ENCODE measurements at regions of chr13 and their contacts with region 1.

Region 1: GRCh38 chr13:24512197-24512907 is at the start of gene PARP4:
- DNase-seq: peak; percentile 63 to 74 (median 72)
- H3K4me3 ChIP-seq: peak within 1 kb of the TSS; percentile 59
- H3K4me3 Mint-ChIP-seq: peak within 1 kb of the TSS; percentile 83 to 94 (median 92)
- H3K27ac ChIP-seq: peak within 1 kb of the TSS; percentile 77
- H3K27ac Mint-ChIP-seq: peak within 1 kb of the TSS; percentile 88 to 97 (median 92)
- H3K4me1 ChIP-seq: peaks cover 18% of the 10 kb centered on the region
- H3K4me1 Mint-ChIP-seq: peaks cover 18 to 46% (median 33%) of the 10 kb centered on the region in 4 donors
- H3K27me3 ChIP-seq: no peaks in the 10 kb centered on the region
- H3K27me3 Mint-ChIP-seq: no peaks in the 10 kb centered on the region
- total RNA-seq, gene PARP4: 90.0 to 92.9 TPM

Region 2: GRCh38 chr13:24557081-24557480 is 44.7 kb after region 1 on chr13:
- CTCF ChIA-PET with region 1: no interaction called
- POLR2A ChIA-PET with region 1: no interaction called
- intact Hi-C with region 1: loop called (anchors 2 kb)
- DNase-seq: no peak
- H3K4me3 ChIP-seq: no peak overlapping the region
- H3K4me3 Mint-ChIP-seq: no peak overlapping the region
- H3K27ac ChIP-seq: no peak overlapping the region
- H3K27ac Mint-ChIP-seq: no peak overlapping the region
- H3K4me1 ChIP-seq: no peaks in the 10 kb centered on the region
- H3K4me1 Mint-ChIP-seq: peaks cover 7 to 12% (median 9%) of the 10 kb centered on the region in 4 donors
- H3K27me3 ChIP-seq: no peaks in the 10 kb centered on the region
- H3K27me3 Mint-ChIP-seq: peaks cover 28 to 36% of the 10 kb centered on the region in 2 donors

Region 3: GRCh38 chr13:24618014-24618955 is 105.9 kb after region 1 on chr13:
- CTCF ChIA-PET with region 1: no interaction called
- POLR2A ChIA-PET with region 1: no interaction called
- intact Hi-C with region 1: loop called (anchors 5 kb)
- DNase-seq: peak; percentile 52 to 80 (median 64)
- H3K4me3 ChIP-seq: no peak overlapping the region
- H3K4me3 Mint-ChIP-seq: peak overlapping the region in 7 of 8 donors; percentile 10 to 48 (median 29)
- H3K27ac ChIP-seq: peak overlapping the region; percentile 25
- H3K27ac Mint-ChIP-seq: peak overlapping the region; percentile 81 to 94 (median 86)
- H3K4me1 ChIP-seq: peaks cover 21% of the 10 kb centered on the region
- H3K4me1 Mint-ChIP-seq: peaks cover 20 to 45% (median 31%) of the 10 kb centered on the region in 4 donors
- H3K27me3 ChIP-seq: no peaks in the 10 kb centered on the region
- H3K27me3 Mint-ChIP-seq: no peaks in the 10 kb centered on the region

Region 4: DNA sequence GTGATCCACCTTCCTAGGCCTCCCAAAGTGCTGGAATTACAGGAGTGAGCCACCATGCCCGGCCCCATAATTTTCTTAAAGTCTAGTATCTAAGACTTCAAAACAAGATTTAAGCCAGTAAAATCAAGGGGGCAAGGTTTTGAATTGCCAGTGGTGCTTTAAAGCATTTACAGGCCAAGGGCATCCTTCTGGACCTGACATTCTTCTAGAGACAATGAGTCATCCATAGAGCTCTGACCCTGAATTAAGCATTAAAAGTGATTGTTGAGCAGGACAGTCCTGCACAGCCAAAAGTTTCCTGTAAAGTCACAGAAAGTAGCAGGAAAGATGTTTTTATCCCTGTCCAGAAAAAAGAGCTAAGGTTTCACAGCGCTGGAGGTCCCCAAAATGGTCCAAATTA is 117.0 kb after region 1 on chr13:
- CTCF ChIA-PET with region 1: no interaction called
- POLR2A ChIA-PET with region 1: no interaction called
- intact Hi-C with region 1: no loop called
- DNase-seq: no peak
- H3K4me3 ChIP-seq: no peak overlapping the region
- H3K4me3 Mint-ChIP-seq: no peak overlapping the region
- H3K27ac ChIP-seq: no peak overlapping the region
- H3K27ac Mint-ChIP-seq: peak overlapping the region in 1 of 7 donors; percentile 62
- H3K4me1 ChIP-seq: peaks cover 38% of the 10 kb centered on the region
- H3K4me1 Mint-ChIP-seq: peaks cover 20 to 55% (median 33%) of the 10 kb centered on the region in 4 donors
- H3K27me3 ChIP-seq: no peaks in the 10 kb centered on the region
- H3K27me3 Mint-ChIP-seq: no peaks in the 10 kb centered on the region